ENCODE measurements at regions of chr10 and their contacts with region 1.

Region 1: DNA sequence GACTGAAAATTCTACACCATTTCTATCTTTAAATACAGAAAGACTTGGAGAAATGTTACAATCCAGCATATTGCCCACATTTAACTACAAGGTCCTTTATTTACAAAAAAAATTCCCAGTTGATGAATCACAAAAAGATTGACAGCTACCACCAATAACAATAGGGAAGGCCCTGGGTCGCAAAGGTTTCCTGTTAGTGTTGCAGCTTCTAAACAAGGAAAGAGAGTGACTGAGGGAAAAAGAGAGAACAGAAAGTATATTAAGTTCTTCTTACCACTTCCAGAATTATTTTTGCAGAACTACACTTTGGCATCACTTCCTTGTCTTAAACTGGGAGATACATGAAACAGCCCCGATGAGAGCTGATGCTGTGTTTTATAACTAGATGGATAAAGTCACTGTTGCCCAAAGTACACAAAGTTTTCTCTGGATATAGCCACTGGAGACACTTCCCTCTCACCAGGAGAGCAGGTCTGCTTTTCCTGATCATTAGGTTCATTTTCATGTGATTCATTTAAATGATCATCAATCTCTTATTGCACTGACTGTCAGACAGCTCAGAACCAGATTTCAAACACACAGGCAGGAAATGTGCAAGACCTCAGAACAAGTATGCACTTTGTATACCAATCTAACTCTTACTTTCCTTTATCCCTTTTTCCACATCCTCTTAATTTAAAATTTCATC is 57.0 kb downstream of the SHTN1 start:
- DNase-seq: peak; percentile 16 to 80
- H3K4me3 ChIP-seq: no peak overlapping the region; the same call in 1 of the 2 replicates
- H3K27ac ChIP-seq: peak overlapping the region; percentile 74
- H3K4me1 ChIP-seq: peaks cover 25% of the 10 kb centered on the region
- H3K27me3 ChIP-seq: no peaks in the 10 kb centered on the region
- CTCF ChIP-seq: no peak

Region 2: DNA sequence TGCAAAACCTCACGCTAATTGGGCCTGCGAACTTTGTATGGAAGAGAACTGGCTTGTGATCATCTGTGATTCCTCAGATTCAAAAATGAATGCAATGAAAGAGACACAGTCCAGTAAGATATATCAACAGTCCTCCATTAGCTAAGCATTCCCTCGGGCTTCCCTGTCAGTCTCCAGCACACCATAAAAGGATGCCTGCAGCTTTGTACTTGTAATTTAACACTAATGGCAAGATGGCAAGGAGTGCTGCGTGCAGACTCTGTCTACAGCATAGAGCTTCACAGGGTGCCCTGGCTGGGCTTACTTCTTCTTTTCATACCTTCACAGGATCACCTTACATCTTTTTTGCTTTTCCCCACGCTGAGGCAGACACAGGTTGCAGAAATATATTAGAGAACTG is 875.0 kb before region 1 on chr10:
- CTCF ChIA-PET with region 1: no interaction called
- POLR2A ChIA-PET with region 1: no interaction called
- intact Hi-C with region 1: no loop called
- DNase-seq: no peak
- H3K4me3 ChIP-seq: no peak overlapping the region
- H3K27ac ChIP-seq: no peak overlapping the region
- H3K4me1 ChIP-seq: no peaks in the 10 kb centered on the region
- H3K27me3 ChIP-seq: peaks cover 7% of the 10 kb centered on the region; the same call in 1 of the 2 replicates
- CTCF ChIP-seq: no peak

Region 3: DNA sequence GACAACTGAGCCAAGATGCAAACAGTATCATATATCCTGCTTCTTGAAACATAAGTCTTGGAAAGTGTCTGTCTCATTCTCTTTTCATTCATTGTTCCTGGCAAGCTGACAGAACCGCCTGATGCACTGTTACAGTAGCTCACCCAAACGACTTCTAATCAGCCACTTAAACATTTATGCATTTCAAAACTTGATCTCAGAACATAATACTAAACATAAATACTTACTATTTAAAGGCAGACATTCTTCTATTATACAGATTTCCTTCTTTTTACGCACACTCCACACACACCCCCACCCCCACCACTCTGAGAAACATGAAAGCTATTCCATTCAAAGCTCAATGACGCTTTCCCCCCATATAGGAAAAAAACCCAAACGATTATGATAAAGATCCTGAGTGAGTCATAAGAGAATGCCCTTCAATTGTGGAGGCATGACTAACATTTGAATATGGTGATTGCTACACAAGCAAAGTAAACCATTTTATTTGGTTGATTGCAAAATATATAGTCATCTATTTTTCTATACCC is 26.6 kb after region 1 on chr10:
- CTCF ChIA-PET with region 1: no interaction called
- POLR2A ChIA-PET with region 1: no interaction called
- intact Hi-C with region 1: loop called (anchors 1 kb)
- DNase-seq: peak; percentile 21 to 83
- H3K4me3 ChIP-seq: no peak overlapping the region
- H3K27ac ChIP-seq: peak overlapping the region; percentile 39
- H3K4me1 ChIP-seq: peaks cover 21% of the 10 kb centered on the region
- H3K27me3 ChIP-seq: no peaks in the 10 kb centered on the region
- CTCF ChIP-seq: no peak

Region 4: DNA sequence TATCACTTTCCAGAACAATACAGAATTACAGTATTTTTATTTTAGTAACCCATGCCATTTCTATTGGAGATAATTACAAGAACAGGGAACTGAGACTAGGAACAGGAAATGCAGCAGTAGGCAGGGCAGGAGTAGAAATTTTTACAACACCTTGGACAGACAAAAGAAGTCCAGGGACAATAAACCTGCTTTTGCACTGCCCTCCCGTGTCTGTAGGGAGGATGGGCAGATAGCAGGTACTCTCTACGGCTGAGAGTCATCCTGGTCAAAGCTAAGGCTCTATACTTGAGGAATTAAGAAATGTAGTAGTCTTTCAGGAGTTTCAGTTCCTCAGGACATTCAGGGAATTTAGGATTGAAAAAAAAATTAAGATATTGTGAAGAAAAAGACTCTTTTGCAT is 126.6 kb after region 1 on chr10:
- CTCF ChIA-PET with region 1: no interaction called
- POLR2A ChIA-PET with region 1: no interaction called
- intact Hi-C with region 1: loop called (anchors 5 kb)
- DNase-seq: no peak
- H3K4me3 ChIP-seq: no peak overlapping the region
- H3K27ac ChIP-seq: no peak overlapping the region
- H3K4me1 ChIP-seq: peaks cover 15% of the 10 kb centered on the region; the same call in 1 of the 2 replicates
- H3K27me3 ChIP-seq: no peaks in the 10 kb centered on the region
- CTCF ChIP-seq: no peak

Region 5: GRCh38 chr10:117167789-117168674 is 220.0 kb after region 1 on chr10:
- CTCF ChIA-PET with region 1: no interaction called
- POLR2A ChIA-PET with region 1: no interaction called
- intact Hi-C with region 1: loop called (anchors 10 kb)
- DNase-seq: no peak
- H3K4me3 ChIP-seq: no peak overlapping the region
- H3K27ac ChIP-seq: no peak overlapping the region
- H3K4me1 ChIP-seq: no peaks in the 10 kb centered on the region
- H3K27me3 ChIP-seq: peaks cover 27% of the 10 kb centered on the region
- CTCF ChIP-seq: peak; percentile 45